HEK293 (cell line): ENCODE measurements at regions of chr22 and their contacts with region 1.

Region 1: GRCh38 chr22:38733329-38733723 is 22.5 kb downstream of the SUN2 start:
- H3K4me3 ChIP-seq: no peak overlapping the region
- H3K27ac ChIP-seq: no peak overlapping the region
- H3K4me1 ChIP-seq: no peaks in the 10 kb centered on the region
- CTCF ChIP-seq: peak; percentile 43; the same call in 1 of the 2 replicates

Region 2: GRCh38 chr22:38718414-38718813 is 14.9 kb before region 1 on chr22:
- CTCF ChIA-PET with region 1: interaction called, 39 read pairs
- POLR2A ChIA-PET with region 1: interaction called, 23 read pairs
- H3K4me3 ChIP-seq: no peak overlapping the region
- H3K27ac ChIP-seq: peak overlapping the region; percentile 34; the same call in 1 of the 2 replicates
- H3K4me1 ChIP-seq: peaks cover 12% of the 10 kb centered on the region
- CTCF ChIP-seq: peak; percentile 58

Region 3: DNA sequence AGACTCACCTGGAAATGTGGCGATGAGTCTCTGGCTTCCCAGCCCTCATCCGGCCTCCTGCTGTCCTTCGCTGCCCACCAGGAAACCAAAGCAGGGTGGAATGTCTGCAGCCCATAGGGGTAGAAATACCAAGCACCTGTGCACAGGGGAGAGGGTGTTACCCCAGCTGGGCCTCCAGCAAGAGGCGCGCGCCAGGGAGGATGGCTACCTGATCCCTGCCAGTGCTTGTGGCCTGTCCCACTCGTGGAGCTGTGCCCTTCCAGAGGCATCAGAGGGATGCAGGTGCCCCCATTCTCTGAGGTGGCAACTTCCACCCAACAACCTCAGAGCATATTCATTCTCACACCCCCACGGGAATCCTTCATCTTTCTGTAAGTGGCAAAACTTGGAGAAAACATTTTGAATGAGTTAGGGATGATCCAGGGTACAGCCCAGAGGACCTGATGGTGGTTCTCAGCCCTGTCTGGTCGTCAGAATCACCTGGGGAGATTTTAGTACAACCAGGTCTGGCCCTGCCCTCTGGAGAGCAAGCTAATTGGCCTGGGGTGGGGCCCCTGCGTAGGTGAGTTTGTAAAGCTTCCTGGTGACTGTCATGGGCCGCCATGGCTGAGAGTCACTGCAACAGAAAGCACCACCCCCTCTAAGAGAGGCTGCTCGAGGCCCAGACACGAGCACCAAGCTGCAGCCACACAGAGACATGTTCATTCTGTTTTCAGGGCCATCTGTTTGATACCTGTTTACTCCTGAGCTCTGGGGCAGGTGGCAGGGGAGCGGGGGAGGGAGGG is 12.5 kb after region 1 on chr22:
- CTCF ChIA-PET with region 1: interaction called, 12 read pairs
- POLR2A ChIA-PET with region 1: interaction called, 4 read pairs
- H3K4me3 ChIP-seq: no peak overlapping the region
- H3K27ac ChIP-seq: 0 out of 2 replicates have a peak overlapping the region, but pooled peaks have one; percentile 9
- H3K4me1 ChIP-seq: no peaks in the 10 kb centered on the region
- CTCF ChIP-seq: no peak